ENCODE measurements at regions of chr14 and their contacts with region 1.

Region 1: DNA sequence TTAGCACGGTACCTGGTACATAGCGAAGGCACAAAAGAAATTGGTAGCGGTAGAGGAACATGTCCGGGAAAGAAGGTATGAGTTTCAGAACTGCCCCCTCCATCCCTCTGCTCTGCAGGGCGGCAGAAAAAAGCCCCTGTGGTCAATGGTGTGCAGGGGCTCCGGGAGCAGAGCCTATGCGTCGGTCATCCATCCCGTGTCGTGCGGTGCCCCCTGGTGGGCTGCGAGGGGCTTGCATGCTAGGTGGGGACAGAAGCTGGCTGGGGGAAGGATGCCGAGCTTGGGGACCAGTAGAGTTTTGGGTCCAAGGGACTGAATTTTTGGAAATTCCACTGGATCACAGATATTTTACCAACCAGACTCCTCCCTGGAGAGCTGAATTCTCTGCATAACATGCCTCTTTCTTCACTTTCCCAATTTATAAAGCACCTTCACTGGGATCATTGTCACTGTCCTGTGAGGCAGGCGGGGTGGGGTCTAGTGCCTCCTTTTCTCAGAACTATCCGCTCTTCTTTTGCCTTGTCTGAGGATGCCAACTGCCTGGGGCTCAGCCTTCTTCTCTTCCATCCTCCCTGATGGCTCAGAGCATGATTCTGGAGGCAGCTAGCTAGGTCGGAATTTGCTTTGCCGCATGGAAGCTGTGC is 148.7 kb downstream of the SMOC1 start:
- DNase-seq: peak; percentile 46
- ATAC-seq: peak; percentile 92
- H3K4me3 ChIP-seq: no peak overlapping the region
- H3K27ac ChIP-seq: no peak overlapping the region
- H3K4me1 ChIP-seq: 0 out of 2 replicates have a peak, but pooled peaks cover 2% of the 10 kb centered on the region
- H3K27me3 ChIP-seq: no peaks in the 10 kb centered on the region
- CTCF ChIP-seq: peak; percentile 94
- POLR2A ChIP-seq: peak; percentile 59; the same call in 1 of the 2 replicates
- RAD21 ChIP-seq: peak; percentile 99

Region 2: DNA sequence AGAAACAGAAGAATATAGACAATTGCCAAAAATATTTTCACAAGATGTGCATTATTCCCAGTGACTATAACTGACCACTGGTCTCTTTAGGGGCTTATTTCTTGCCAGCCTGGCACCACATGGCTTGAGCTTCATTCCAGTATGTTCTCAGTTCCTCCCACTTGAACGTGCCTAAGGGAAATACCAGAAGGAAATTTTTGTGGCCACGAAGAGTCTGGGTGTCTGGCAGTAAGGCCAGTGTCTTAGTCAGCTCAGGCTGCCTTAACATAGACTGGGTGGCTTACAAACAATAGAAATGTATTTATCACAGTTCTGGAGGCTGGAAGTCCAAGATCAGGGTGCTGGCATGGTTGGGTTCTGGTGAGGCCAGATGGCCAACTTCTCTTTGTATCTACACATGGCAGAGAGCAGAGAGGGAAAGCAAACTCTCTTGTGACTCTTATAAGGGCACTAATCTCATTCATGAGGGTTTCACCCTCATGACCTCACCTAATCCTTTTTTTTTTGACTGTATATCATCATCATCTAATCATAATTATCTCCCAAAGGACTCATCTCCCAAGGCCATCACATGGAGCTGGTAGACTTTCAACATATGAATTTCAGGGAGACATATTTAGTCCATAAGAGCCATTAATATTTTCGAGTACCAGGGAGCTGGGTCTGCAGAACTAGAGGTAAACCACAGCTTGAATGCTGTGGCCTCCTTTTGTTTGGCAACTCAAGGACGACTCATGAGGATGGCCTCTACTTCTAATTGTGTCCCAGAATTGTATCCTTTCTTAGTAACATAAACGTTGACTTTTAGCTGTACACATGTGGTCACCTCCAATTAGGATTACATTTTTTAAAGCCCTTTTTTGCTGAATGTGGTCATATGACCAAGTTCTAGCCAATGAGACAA is 153.8 kb before region 1 on chr14:
- CTCF ChIA-PET with region 1: interaction called, 11 read pairs
- POLR2A ChIA-PET with region 1: no interaction called
- dilution Hi-C with region 1: no loop called
- in situ Hi-C with region 1: no loop called
- intact Hi-C with region 1: loop called (anchors 1 kb)
- DNase-seq: peak; percentile 51
- ATAC-seq: peak; percentile 40; the same call in 1 of the 2 replicates
- H3K4me3 ChIP-seq: no peak overlapping the region
- H3K27ac ChIP-seq: no peak overlapping the region
- H3K4me1 ChIP-seq: peaks cover 3% of the 10 kb centered on the region
- H3K27me3 ChIP-seq: peaks cover 2% of the 10 kb centered on the region; the same call in 1 of the 2 replicates
- CTCF ChIP-seq: no peak
- POLR2A ChIP-seq: no peak
- RAD21 ChIP-seq: no peak

Region 3: GRCh38 chr14:69879175-69880043 is 148.5 kb before region 1 on chr14 and contains the start of gene SMOC1:
- CTCF ChIA-PET with region 1: interaction called, 11 read pairs
- POLR2A ChIA-PET with region 1: no interaction called
- dilution Hi-C with region 1: no loop called
- in situ Hi-C with region 1: no loop called
- intact Hi-C with region 1: loop called (anchors 1 kb)
- DNase-seq: peak; percentile 79
- ATAC-seq: peak; percentile 88
- H3K4me3 ChIP-seq: peak within 1 kb of the TSS; percentile 78
- H3K27ac ChIP-seq: peak within 1 kb of the TSS; percentile 27; the same call in 1 of the 2 replicates
- H3K4me1 ChIP-seq: peaks cover 7% of the 10 kb centered on the region
- H3K27me3 ChIP-seq: 0 out of 2 replicates have a peak, but pooled peaks cover 2% of the 10 kb centered on the region
- CTCF ChIP-seq: 0 out of 2 replicates have a peak, but pooled peaks have one; percentile 8
- POLR2A ChIP-seq: peak; percentile 92
- RAD21 ChIP-seq: 0 out of 2 replicates have a peak, but pooled peaks have one; percentile 11
- total RNA-seq, gene SMOC1: 0.90 and 1.1 TPM in 2 replicates

Region 4: GRCh38 chr14:70008284-70009262 is 19.3 kb before region 1 on chr14:
- CTCF ChIA-PET with region 1: no interaction called
- POLR2A ChIA-PET with region 1: no interaction called
- dilution Hi-C with region 1: no loop called
- in situ Hi-C with region 1: no loop called
- intact Hi-C with region 1: no loop called
- DNase-seq: no peak
- ATAC-seq: no peak; the same call in 1 of the 2 replicates
- H3K4me3 ChIP-seq: no peak overlapping the region
- H3K27ac ChIP-seq: peak overlapping the region; percentile 46; the same call in 1 of the 2 replicates
- H3K4me1 ChIP-seq: peaks cover 8% of the 10 kb centered on the region
- H3K27me3 ChIP-seq: no peaks in the 10 kb centered on the region
- CTCF ChIP-seq: no peak
- POLR2A ChIP-seq: no peak
- RAD21 ChIP-seq: no peak

Region 5: GRCh38 chr14:70468731-70469130 is 440.8 kb after region 1 on chr14:
- CTCF ChIA-PET with region 1: no interaction called
- POLR2A ChIA-PET with region 1: no interaction called
- dilution Hi-C with region 1: no loop called
- in situ Hi-C with region 1: no loop called
- intact Hi-C with region 1: no loop called
- DNase-seq: no peak
- ATAC-seq: no peak
- H3K4me3 ChIP-seq: no peak overlapping the region
- H3K27ac ChIP-seq: no peak overlapping the region
- H3K4me1 ChIP-seq: no peaks in the 10 kb centered on the region
- H3K27me3 ChIP-seq: no peaks in the 10 kb centered on the region
- CTCF ChIP-seq: no peak
- POLR2A ChIP-seq: no peak
- RAD21 ChIP-seq: no peak

Measured in IMR-90 (cell line).